ENCODE measurements at regions of chr11 and their contacts with region 1.

Region 1: GRCh38 chr11:62665075-62665598 is at the starts of genes C11orf98 and CSKMT:
- DNase-seq: peak; percentile 95
- ATAC-seq: peak; percentile 89
- H3K4me3 Mint-ChIP-seq: peak within 1 kb of the TSS; percentile 97
- H3K27ac Mint-ChIP-seq: peak within 1 kb of the TSS; percentile 88
- H3K4me1 Mint-ChIP-seq: peaks cover 45% of the 10 kb centered on the region
- H3K27me3 Mint-ChIP-seq: no peaks in the 10 kb centered on the region
- CTCF ChIP-seq: no peak
- total RNA-seq, gene C11orf98: 107 and 120 TPM in 2 replicates
- total RNA-seq, gene CSKMT: 50.5 and 52.1 TPM in 2 replicates

Region 2: DNA sequence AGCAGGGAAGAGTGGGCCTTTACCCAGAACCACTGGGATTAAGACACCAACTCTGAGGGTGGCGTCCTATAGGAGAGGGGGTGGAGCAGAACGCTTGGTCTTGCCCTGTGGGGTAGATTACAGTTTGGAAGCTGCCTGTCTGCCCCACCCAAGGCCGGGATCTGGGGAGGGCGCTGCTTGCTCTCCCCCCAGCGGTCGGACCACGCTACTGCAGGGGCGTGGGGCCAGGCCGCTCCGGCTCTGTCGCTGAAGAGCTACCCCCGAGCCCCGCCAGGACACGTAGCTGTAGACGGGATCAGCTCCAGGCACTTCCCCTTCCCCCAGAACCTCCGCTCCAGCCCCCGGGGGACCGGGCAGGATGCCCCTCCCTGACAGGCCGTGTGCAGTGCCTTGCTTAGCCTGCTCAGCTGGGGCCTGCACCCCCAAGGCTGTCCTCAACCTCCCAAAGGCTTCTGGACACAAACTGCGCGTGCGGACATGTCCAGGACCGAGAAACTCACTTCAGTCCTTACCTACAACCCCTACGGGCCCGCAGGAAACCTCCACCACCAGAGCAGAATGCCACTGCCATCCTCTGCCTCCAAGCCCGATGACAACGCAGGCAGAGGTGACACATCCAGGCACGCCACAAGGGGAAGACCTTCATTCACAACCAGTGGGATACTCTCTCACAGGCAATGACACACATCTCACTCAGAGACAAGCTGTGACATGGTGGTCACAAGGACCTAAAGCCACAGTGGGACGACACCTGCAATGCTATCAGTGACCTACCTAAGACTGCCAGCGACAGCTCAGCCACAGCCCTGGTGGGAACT is 122.2 kb before region 1 on chr11:
- CTCF ChIA-PET with region 1: no interaction called
- POLR2A ChIA-PET with region 1: interaction called, 16 read pairs
- intact Hi-C with region 1: no loop called
- DNase-seq: peak; percentile 74
- ATAC-seq: peak; percentile 29
- H3K4me3 Mint-ChIP-seq: peak overlapping the region; percentile 95
- H3K27ac Mint-ChIP-seq: peak overlapping the region; percentile 97
- H3K4me1 Mint-ChIP-seq: peaks cover 78% of the 10 kb centered on the region
- H3K27me3 Mint-ChIP-seq: no peaks in the 10 kb centered on the region
- CTCF ChIP-seq: peak; percentile 78

Region 3: DNA sequence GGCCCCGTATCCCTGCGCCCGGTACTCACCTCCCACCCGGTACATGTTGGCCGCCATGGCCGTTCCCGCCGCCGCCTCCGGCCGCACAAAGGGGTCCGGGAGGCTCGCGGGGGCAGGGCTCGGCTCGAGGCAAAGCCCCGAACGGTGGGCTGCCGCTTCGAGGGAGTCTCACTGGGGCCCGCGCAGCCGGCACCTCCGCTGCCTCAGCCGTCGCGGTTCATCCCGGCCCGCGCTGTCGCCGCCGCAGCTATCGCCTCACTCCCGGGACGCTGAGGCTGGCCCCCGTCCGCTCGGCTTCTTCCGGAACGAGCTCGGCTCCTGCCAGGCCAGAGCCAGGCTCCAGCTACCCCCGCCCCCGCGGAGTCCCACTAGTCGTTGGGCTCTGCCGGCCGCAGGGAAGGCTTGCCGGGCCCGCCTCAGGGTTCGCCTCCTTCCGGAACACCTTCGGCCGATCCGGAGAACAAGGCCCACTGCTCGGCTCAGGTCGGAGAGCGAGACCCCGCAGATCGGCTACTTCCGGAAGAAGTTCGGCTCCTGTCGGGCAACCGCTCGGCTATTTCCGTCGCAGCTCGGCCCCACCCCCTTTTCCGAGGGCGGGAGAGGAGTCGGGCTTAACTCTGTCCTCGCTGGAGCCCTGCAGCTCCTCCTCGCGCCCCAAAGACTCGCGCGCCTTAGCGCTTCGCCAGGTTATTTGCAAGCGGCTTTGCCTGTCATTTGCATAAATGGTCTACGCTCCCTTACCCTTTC is 63.6 kb before region 1 on chr11 and contains the start of gene MTA2:
- CTCF ChIA-PET with region 1: no interaction called
- POLR2A ChIA-PET with region 1: interaction called, 60 read pairs
- intact Hi-C with region 1: no loop called
- DNase-seq: peak; percentile 100
- ATAC-seq: peak; percentile 81
- H3K4me3 Mint-ChIP-seq: peak within 1 kb of the TSS; percentile 92
- H3K27ac Mint-ChIP-seq: peak within 1 kb of the TSS; percentile 97
- H3K4me1 Mint-ChIP-seq: peaks cover 45% of the 10 kb centered on the region
- H3K27me3 Mint-ChIP-seq: no peaks in the 10 kb centered on the region
- CTCF ChIP-seq: no peak
- total RNA-seq, gene MTA2: 170 and 175 TPM in 2 replicates

Region 4: GRCh38 chr11:62645956-62646824 is 18.9 kb before region 1 on chr11 and contains the start of gene GANAB:
- CTCF ChIA-PET with region 1: no interaction called
- POLR2A ChIA-PET with region 1: interaction called, 400 read pairs
- intact Hi-C with region 1: loop called (anchors 2 kb)
- DNase-seq: peak; percentile 89
- ATAC-seq: peak; percentile 99
- H3K4me3 Mint-ChIP-seq: peak within 1 kb of the TSS; percentile 93
- H3K27ac Mint-ChIP-seq: peak within 1 kb of the TSS; percentile 86
- H3K4me1 Mint-ChIP-seq: peaks cover 34% of the 10 kb centered on the region
- H3K27me3 Mint-ChIP-seq: no peaks in the 10 kb centered on the region
- CTCF ChIP-seq: no peak
- total RNA-seq, gene GANAB: 187 and 189 TPM in 2 replicates

Region 5: DNA sequence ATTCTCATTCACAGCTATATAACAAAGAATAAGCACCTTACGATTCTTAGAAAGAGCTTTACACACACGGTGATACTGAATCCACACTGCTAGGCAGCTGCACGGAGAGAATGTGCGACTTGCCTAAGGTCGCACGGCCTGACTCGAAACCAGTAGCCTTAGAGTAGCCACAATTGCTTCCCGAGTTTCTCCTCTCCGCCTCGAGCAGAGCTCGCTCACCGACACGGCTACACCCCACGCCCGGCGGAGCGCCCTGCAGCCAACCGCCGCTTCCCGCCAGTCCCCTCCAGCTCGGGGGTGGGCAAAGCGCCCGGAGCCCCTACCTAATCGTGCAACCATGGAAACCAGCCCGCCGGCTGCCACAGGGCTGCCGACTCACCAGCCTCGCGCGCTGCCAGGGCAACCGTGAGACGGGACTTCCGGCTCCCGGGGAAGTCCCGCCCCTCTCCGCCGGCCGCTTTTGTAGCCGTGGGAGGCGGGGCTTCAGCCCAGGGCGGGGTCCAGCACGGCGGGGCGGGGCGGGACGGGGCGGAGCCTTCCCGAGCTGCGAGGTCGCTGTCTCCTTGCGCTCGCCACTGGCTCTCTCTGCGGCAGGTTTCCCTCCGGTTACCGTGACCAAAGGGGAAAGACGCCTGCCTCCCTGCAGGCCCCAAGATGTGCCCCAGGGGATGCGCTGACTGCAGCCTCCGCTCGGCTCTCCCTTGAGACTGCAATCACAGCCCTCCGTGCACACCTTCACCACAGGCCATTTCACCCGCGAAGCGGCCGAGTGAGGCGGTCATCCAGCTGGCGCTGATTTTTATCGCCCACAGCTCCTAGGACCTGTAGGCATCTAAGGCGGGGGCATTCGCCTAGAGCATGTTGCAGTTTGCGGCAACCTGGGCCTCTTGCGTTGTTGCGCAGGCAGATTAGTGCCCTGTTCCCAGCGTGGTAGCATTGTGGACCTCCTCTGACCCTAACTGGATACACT is 41.0 kb after region 1 on chr11:
- CTCF ChIA-PET with region 1: interaction called, 5 read pairs
- POLR2A ChIA-PET with region 1: interaction called, 86 read pairs
- intact Hi-C with region 1: loop called (anchors 1 kb)
- DNase-seq: peak; percentile 90
- ATAC-seq: peak; percentile 73
- H3K4me3 Mint-ChIP-seq: peak overlapping the region; percentile 92
- H3K27ac Mint-ChIP-seq: peak overlapping the region; percentile 99
- H3K4me1 Mint-ChIP-seq: peaks cover 49% of the 10 kb centered on the region
- H3K27me3 Mint-ChIP-seq: no peaks in the 10 kb centered on the region
- CTCF ChIP-seq: no peak

Region 6: GRCh38 chr11:62787005-62787759 is 122.0 kb after region 1 on chr11 and contains the start of gene TMEM179B:
- CTCF ChIA-PET with region 1: interaction called, 4 read pairs
- POLR2A ChIA-PET with region 1: interaction called, 23 read pairs
- intact Hi-C with region 1: loop called (anchors 2 kb)
- DNase-seq: peak; percentile 87
- ATAC-seq: peak; percentile 71
- H3K4me3 Mint-ChIP-seq: peak within 1 kb of the TSS; percentile 92
- H3K27ac Mint-ChIP-seq: peak within 1 kb of the TSS; percentile 89
- H3K4me1 Mint-ChIP-seq: peaks cover 42% of the 10 kb centered on the region
- H3K27me3 Mint-ChIP-seq: no peaks in the 10 kb centered on the region
- CTCF ChIP-seq: peak; percentile 66
- total RNA-seq, gene TMEM179B: 34.9 and 47.7 TPM in 2 replicates

Measured in activated B cell treated with CpG ODN at 0.5 μM for 24 hours (primary cell).